H1 (cell line): ENCODE measurements at regions of chr21 and their contacts with region 1.

Region 1: DNA sequence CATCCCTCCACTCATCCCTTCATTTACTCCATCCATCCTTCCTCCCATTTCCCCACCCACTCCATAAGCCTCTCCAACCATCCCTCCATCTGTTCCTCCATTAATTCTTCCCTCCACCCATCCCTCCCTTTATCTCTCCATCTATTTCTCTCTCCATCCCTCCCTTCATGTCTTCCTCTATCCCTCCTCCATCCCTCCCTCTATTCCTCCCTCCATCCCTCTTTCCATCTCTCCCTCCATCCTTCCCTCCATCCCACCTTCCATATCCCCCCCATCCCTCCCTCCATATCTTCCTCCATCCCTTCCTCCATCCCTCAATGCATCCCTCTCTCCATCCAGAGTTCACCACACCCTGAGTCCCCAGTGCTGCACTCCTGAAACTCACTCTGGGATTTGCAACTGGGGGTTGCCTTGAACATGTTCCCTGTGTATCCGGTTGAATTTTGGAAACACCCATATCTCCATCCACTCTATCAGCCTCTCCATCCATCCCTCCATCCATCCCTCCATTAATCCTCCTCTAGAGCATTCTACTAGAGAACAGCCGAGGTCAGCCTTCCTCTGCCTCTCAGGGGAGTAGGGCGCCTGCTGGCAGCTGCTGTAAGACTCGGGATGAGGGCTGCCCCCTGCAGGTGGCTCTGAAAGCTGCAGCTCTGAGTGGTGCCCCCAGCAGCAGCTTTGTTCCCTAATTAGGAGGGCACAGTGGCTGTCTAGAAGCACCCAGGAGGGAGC is 39.4 kb downstream of the ABCG1 start:
- DNase-seq: peak; percentile 49 to 92
- H3K4me3 ChIP-seq: no peak overlapping the region
- H3K27ac ChIP-seq: no peak overlapping the region
- H3K4me1 ChIP-seq: peaks cover 0 to 4% (median 3%) of the 10 kb centered on the region in 4 experiments; a peak in 2 of 7 replicates
- H3K27me3 ChIP-seq: no peaks in the 10 kb centered on the region; a peak in 1 of 7 replicates
- CTCF ChIP-seq: peak; percentile 88 to 97 (median 92)
- EP300 ChIP-seq: no peak
- POLR2A ChIP-seq: no peak
- RAD21 ChIP-seq: peak; percentile 66 to 83

Region 2: DNA sequence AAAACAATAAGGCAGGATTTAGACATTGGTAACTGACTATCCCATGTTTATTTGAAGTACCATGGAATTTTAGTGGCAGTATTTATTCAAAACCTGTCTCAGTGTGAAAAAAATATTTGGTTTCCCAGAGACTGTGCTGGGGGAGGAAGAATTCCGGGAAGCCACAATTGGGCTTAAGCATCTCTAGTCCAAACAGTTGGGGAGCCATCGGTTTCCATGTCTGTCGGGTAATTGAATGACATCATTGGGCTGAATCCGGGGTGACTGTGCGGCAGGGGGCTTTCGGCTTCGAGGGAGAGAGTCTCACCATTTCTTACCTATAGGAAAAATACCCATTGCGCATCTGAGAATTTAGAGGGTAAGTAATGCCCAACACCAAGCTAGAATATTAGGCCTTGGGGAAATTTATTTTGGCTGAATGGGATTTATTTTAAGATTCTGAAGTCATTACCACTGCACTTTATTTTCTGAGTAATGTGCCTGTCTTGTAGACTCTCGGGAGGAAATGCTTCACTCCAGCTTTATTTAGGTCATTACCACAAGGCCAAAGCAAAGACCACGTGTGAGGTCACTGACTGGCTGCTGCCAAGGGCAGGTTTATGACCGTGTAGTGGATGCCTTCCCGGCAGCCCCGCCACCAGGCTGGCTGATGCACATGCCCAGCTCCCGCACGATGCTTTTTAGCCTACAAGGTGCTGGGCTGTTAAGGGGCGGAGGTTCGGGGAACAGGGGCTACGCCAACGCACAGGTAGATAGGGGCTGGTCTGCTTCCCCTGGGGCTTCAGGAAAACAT is 210.3 kb before region 1 on chr21:
- CTCF ChIA-PET with region 1: no interaction called
- POLR2A ChIA-PET with region 1: no interaction called
- DNase-seq: no peak
- H3K4me3 ChIP-seq: no peak overlapping the region
- H3K27ac ChIP-seq: no peak overlapping the region
- H3K4me1 ChIP-seq: no peaks in the 10 kb centered on the region; a peak in 1 of 7 replicates
- H3K27me3 ChIP-seq: no peaks in the 10 kb centered on the region
- CTCF ChIP-seq: no peak
- EP300 ChIP-seq: no peak
- POLR2A ChIP-seq: no peak
- RAD21 ChIP-seq: no peak

Region 3: GRCh38 chr21:42073145-42074092 is 184.9 kb before region 1 on chr21:
- CTCF ChIA-PET with region 1: no interaction called
- POLR2A ChIA-PET with region 1: no interaction called
- DNase-seq: no peak
- H3K4me3 ChIP-seq: no peak overlapping the region
- H3K27ac ChIP-seq: no peak overlapping the region
- H3K4me1 ChIP-seq: no peaks in the 10 kb centered on the region
- H3K27me3 ChIP-seq: no peaks in the 10 kb centered on the region
- CTCF ChIP-seq: no peak
- EP300 ChIP-seq: no peak
- POLR2A ChIP-seq: no peak
- RAD21 ChIP-seq: no peak; a peak in 1 of 4 replicates

Region 4: DNA sequence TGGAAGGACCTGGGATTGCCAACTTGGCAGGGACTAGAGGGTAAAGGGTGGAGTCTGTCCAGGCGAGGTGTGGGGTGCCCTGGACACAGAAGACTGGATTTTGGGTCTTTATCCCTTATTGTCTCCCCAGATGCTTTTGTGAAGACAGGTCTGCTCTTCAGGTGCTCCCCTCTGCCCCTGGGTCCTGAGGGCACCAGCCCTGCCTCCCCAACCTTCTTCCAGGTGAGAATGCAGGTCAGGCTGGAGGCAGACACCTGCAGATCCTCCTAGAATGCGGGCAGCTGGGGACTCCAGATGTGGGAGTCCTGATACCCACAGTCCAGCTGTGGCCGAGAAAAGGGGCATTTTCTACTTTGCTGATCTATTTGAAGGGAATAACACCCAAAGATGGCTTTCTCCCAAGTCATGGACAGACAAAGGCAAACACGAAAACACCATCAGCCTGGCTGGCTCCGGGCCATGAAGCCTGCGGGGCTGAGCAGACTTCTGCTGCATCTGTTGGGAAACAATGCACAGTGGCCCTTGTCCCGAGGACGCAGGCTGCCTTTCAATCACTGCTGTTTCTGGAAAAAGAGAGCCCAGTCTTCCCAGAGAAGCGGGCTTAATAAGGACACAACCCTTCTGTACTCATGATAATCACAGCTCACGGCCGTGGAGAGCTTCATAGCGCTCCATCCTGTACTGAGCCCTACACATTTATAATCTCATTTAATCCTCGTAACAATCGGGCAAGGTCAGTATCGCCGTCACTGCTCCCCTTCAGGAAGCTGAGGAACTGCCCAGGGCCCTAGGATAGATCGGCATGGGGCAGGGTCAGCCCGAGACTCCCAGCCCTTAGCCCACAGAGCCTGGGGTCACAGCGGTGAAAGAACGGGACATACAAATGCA is 101.4 kb before region 1 on chr21:
- CTCF ChIA-PET with region 1: interaction called, 31 read pairs
- POLR2A ChIA-PET with region 1: no interaction called
- DNase-seq: no peak
- H3K4me3 ChIP-seq: no peak overlapping the region
- H3K27ac ChIP-seq: no peak overlapping the region
- H3K4me1 ChIP-seq: peaks cover 0 to 5% (median 2%) of the 10 kb centered on the region in 4 experiments; a peak in 5 of 7 replicates
- H3K27me3 ChIP-seq: no peaks in the 10 kb centered on the region
- CTCF ChIP-seq: no peak
- EP300 ChIP-seq: no peak
- POLR2A ChIP-seq: no peak
- RAD21 ChIP-seq: no peak

Region 5: GRCh38 chr21:42199488-42200458 is 58.5 kb before region 1 on chr21:
- CTCF ChIA-PET with region 1: interaction called, 10 read pairs
- POLR2A ChIA-PET with region 1: no interaction called
- DNase-seq: no peak
- H3K4me3 ChIP-seq: no peak overlapping the region
- H3K27ac ChIP-seq: no peak overlapping the region
- H3K4me1 ChIP-seq: no peaks in the 10 kb centered on the region
- H3K27me3 ChIP-seq: no peaks in the 10 kb centered on the region; a peak in 1 of 7 replicates
- CTCF ChIP-seq: no peak
- EP300 ChIP-seq: no peak
- POLR2A ChIP-seq: no peak
- RAD21 ChIP-seq: no peak

Region 6: DNA sequence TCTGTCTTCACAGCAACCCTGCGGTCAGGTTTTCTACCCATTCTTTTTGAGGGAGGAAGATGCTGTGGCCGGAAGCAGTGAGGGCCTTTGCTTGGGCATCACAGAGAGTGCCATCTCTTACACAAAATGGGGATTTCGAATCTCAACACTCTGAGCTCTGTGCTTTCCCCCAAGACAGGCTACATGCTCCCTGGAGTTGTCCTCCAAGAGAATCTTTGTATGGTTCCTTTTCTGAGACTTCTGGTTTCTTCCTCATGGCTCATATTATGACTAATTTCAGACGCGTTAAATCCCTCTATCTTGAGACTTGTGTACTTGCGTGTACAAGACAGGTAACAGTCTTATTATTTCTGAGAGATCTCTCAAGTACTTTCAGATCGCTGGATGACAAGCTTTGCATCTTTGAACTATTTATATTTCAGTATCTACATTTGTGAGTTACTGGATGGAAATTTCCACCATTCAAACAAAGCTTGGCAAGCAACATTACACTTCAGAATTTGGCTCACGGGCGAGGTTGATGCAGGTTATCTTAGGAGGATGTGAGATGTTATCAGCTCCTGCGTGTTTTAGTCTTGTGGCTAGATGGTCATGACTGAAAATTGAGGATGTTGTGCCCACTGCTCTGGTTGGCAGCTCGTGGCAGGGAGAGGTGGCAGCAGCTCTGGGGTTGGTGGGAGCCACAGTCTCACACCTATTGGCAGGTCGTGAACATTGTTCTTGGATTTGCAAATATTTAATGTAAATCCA is 20.0 kb before region 1 on chr21:
- CTCF ChIA-PET with region 1: interaction called, 65 read pairs
- POLR2A ChIA-PET with region 1: interaction called, 6 read pairs
- DNase-seq: no peak
- H3K4me3 ChIP-seq: no peak overlapping the region
- H3K27ac ChIP-seq: no peak overlapping the region
- H3K4me1 ChIP-seq: peaks cover 7 to 21% (median 13%) of the 10 kb centered on the region in 4 experiments
- H3K27me3 ChIP-seq: peaks cover 0 to 24% (median 20%) of the 10 kb centered on the region in 4 experiments; a peak in 5 of 7 replicates
- CTCF ChIP-seq: no peak
- EP300 ChIP-seq: no peak
- POLR2A ChIP-seq: no peak
- RAD21 ChIP-seq: no peak

Region 7: GRCh38 chr21:42289926-42290325 is 31.6 kb after region 1 on chr21:
- CTCF ChIA-PET with region 1: interaction called, 13 read pairs
- POLR2A ChIA-PET with region 1: no interaction called
- DNase-seq: no peak
- H3K4me3 ChIP-seq: no peak overlapping the region
- H3K27ac ChIP-seq: no peak overlapping the region
- H3K4me1 ChIP-seq: no peaks in the 10 kb centered on the region; a peak in 1 of 7 replicates
- H3K27me3 ChIP-seq: no peaks in the 10 kb centered on the region; a peak in 1 of 7 replicates
- CTCF ChIP-seq: no peak
- EP300 ChIP-seq: no peak
- POLR2A ChIP-seq: no peak
- RAD21 ChIP-seq: no peak

Region 8: DNA sequence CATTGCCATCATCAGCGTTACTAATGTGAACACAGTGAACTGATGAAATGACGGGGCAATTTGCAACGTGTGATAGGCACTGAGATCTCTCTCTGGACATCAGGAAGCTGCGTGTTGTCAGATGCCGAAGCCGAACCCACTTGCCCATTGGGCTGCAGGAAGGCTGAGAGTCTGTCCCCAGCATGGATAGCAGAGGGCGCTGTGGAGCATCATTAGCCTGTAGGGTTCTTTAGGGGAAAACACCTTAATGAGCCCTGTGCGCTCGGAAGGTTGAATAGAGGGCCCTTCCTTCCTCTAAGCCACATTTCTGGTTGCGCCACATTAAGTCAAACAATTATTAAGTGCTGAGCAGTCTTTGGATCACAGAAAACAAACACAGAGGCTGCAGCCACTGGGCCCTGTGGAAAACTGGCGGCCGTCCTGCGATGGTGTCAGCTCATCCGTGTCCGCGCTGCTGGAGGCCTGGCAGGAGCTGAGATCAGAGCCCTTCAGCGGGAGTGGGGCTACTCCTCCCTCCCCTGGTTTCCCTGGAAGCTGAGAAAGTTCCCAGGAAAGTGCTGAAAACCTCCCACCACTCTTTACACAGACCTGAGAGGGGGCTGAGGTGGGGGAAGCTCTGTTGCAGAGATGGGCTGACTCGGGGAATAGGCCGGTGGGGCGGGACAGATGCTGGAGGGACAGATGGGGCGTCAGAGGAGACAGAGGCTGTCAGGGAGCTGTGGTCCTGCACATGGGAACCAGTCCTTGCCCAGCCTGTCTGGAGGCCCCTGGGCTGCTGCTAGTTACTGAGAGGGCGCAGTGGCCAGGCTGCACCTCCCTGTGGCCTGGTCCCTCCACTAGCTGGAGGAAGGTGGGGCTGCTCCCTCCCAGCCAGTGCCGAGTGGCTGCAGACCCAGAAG is 79.8 kb after region 1 on chr21:
- CTCF ChIA-PET with region 1: interaction called, 11 read pairs
- POLR2A ChIA-PET with region 1: no interaction called
- DNase-seq: peak; percentile 54 to 89
- H3K4me3 ChIP-seq: no peak overlapping the region
- H3K27ac ChIP-seq: no peak overlapping the region
- H3K4me1 ChIP-seq: peaks cover 0 to 13% (median 4%) of the 10 kb centered on the region in 4 experiments; a peak in 6 of 7 replicates
- H3K27me3 ChIP-seq: no peaks in the 10 kb centered on the region
- CTCF ChIP-seq: peak; percentile 86 to 94 (median 89)
- EP300 ChIP-seq: no peak
- POLR2A ChIP-seq: no peak
- RAD21 ChIP-seq: peak; percentile 71 to 77